Transverse colon (tissue), 4 donors: ENCODE measurements at regions of chr4 and their contacts with region 1.

Region 1: GRCh38 chr4:165355900-165356300 is 22.9 kb upstream of the CPE start:
- DNase-seq: no peak
- H3K4me3 ChIP-seq: no peak overlapping the region
- H3K27ac ChIP-seq: no peak overlapping the region
- H3K4me1 ChIP-seq: no peaks in the 10 kb centered on the region
- H3K27me3 ChIP-seq: no peaks in the 10 kb centered on the region
- CTCF ChIP-seq: peak in 4 of 5 experiments; percentile 19 to 47 (median 40)
- EP300 ChIP-seq: no peak
- POLR2A ChIP-seq: no peak

Region 2: DNA sequence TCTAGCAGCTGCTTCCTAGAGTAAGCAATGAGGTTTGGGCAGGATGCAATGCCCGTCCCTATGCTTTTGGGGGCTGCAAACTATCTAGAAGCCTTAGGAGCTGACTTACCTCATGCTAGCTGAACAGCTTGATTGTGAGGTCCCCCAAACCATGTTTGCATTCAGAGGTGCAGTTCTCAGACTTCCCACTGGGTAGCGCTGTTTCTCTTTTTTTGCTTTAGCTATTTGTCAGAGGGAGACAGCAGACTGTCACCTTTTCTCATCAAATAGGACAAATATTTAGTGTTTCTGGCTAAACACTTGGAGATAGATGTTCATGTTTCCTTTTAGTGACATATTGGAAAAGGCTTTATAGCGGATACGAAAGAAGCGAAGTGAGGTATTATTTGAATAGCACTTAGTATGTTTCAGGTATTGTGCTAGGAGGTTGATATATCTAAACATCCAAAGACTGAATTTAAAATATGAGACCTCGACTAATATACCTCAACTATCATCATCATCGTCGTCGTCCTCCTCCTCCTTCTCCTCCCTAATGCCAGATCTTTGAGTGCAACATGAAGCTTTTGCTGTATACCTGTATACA is 224.6 kb before region 1 on chr4:
- in situ Hi-C with region 1: loop called in 1 of 4 experiments (anchors 10 kb)
- intact Hi-C with region 1: no loop called
- DNase-seq: peak; percentile 67
- H3K4me3 ChIP-seq: no peak overlapping the region
- H3K27ac ChIP-seq: no peak overlapping the region
- H3K4me1 ChIP-seq: no peaks in the 10 kb centered on the region
- H3K27me3 ChIP-seq: peaks cover 3% of the 10 kb centered on the region
- CTCF ChIP-seq: peak; percentile 84 to 93 (median 88)
- EP300 ChIP-seq: no peak
- POLR2A ChIP-seq: no peak